Activated CD4-positive, alpha-beta memory T cell treated with anti-CD3 and anti-CD28 coated beads, Interleukin-2, amount 10 ng/mL, durations not matched to agents 7 days and 5 days (primary cell): ENCODE measurements at regions of chr15 and their contacts with region 1.

Region 1: GRCh38 chr15:29103824-29104565 is 165.6 kb downstream of the NSMCE3 start:
- DNase-seq: peak; percentile 52
- H3K4me3 Mint-ChIP-seq: no peak overlapping the region
- H3K27ac Mint-ChIP-seq: no peak overlapping the region
- H3K4me1 Mint-ChIP-seq: no peaks in the 10 kb centered on the region
- H3K27me3 Mint-ChIP-seq: no peaks in the 10 kb centered on the region

Region 2: GRCh38 chr15:28861031-28861534 is 242.9 kb before region 1 on chr15:
- CTCF ChIA-PET with region 1: no interaction called
- POLR2A ChIA-PET with region 1: no interaction called
- DNase-seq: no peak
- H3K4me3 Mint-ChIP-seq: no peak overlapping the region
- H3K27ac Mint-ChIP-seq: no peak overlapping the region
- H3K4me1 Mint-ChIP-seq: no peaks in the 10 kb centered on the region
- H3K27me3 Mint-ChIP-seq: no peaks in the 10 kb centered on the region

Region 3: GRCh38 chr15:29024662-29025061 is 79.3 kb before region 1 on chr15:
- CTCF ChIA-PET with region 1: no interaction called
- POLR2A ChIA-PET with region 1: no interaction called
- DNase-seq: no peak
- H3K4me3 Mint-ChIP-seq: no peak overlapping the region
- H3K27ac Mint-ChIP-seq: no peak overlapping the region
- H3K4me1 Mint-ChIP-seq: no peaks in the 10 kb centered on the region
- H3K27me3 Mint-ChIP-seq: no peaks in the 10 kb centered on the region

Region 4: GRCh38 chr15:29090617-29091466 is 13.2 kb before region 1 on chr15:
- CTCF ChIA-PET with region 1: interaction called, 22 read pairs
- POLR2A ChIA-PET with region 1: no interaction called
- DNase-seq: peak; percentile 48
- H3K4me3 Mint-ChIP-seq: no peak overlapping the region
- H3K27ac Mint-ChIP-seq: peak overlapping the region; percentile 71
- H3K4me1 Mint-ChIP-seq: peaks cover 9% of the 10 kb centered on the region
- H3K27me3 Mint-ChIP-seq: no peaks in the 10 kb centered on the region

Region 5: GRCh38 chr15:29208352-29208751 is 104.4 kb after region 1 on chr15:
- CTCF ChIA-PET with region 1: no interaction called
- POLR2A ChIA-PET with region 1: no interaction called
- DNase-seq: no peak
- H3K4me3 Mint-ChIP-seq: no peak overlapping the region
- H3K27ac Mint-ChIP-seq: no peak overlapping the region
- H3K4me1 Mint-ChIP-seq: peaks cover 2% of the 10 kb centered on the region
- H3K27me3 Mint-ChIP-seq: peaks cover 15% of the 10 kb centered on the region